Heart right ventricle (tissue), 16 donors: ENCODE measurements at regions of chr1 and their contacts with region 1.

Region 1: GRCh38 chr1:154479764-154480421 is 22.1 kb upstream of the TDRD10 start:
- DNase-seq: peak in 1 of 2 donors; percentile 79
- ATAC-seq: peak; percentile 84 to 92 (median 90)
- H3K4me3 ChIP-seq: no peak overlapping the region
- H3K27ac ChIP-seq: peak overlapping the region in 4 of 10 donors; percentile 23 to 66 (median 44)
- H3K4me1 ChIP-seq: peaks cover 0 to 49% (median 27%) of the 10 kb centered on the region in 9 donors
- H3K27me3 ChIP-seq: no peaks in the 10 kb centered on the region
- CTCF ChIP-seq: peak; percentile 85 to 95 (median 94)

Region 2: DNA sequence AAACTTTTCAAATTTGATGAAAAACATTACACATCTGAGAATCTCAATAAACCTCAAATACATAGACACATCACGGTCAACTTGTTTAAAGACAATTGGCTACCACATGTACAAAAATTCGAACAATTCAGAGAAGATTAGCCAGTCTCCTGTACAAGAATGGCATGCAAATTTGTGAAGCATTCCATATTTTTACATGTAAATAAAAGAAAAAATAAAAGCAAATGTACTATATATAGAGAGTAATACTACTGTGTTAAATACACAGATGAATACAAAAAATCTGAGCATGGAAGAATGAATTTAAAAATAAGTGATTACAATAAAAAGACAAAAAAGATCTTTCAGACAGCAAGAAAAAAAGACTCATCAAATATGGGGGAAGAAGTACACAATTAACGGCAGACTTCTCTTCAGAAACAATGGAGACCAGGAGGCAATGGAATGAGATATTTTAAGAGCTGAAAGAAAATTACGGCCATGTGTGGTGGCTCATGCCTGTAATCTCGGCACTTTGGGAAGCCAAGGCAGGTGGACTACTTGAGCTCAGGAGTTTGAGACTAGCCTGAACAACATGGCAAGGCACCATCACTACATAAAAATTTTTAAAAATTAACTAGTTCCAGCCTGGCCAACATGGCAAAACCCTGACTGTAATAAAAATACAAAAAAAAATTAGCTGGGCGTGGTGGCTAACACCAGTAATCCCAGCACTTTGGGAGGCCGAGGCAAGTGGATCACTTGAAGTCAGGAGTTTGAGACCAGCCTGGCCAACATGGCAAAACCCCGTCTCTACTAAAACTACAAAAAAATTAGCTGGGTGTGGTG is 184.3 kb before region 1 on chr1:
- intact Hi-C with region 1: no loop called
- DNase-seq: no peak
- ATAC-seq: no peak
- H3K4me3 ChIP-seq: no peak overlapping the region
- H3K27ac ChIP-seq: no peak overlapping the region
- H3K4me1 ChIP-seq: no peaks in the 10 kb centered on the region
- H3K27me3 ChIP-seq: no peaks in the 10 kb centered on the region
- CTCF ChIP-seq: no peak

Region 3: GRCh38 chr1:154419620-154420571 is 60.0 kb before region 1 on chr1:
- intact Hi-C with region 1: no loop called
- DNase-seq: peak; percentile 84 to 87
- ATAC-seq: peak; percentile 83 to 93 (median 90)
- H3K4me3 ChIP-seq: peak overlapping the region in 3 of 10 donors; percentile 12 to 26 (median 21)
- H3K27ac ChIP-seq: peak overlapping the region; percentile 78 to 97 (median 92)
- H3K4me1 ChIP-seq: peaks cover 28 to 96% (median 78%) of the 10 kb centered on the region in 9 donors
- H3K27me3 ChIP-seq: no peaks in the 10 kb centered on the region
- CTCF ChIP-seq: no peak

Region 4: DNA sequence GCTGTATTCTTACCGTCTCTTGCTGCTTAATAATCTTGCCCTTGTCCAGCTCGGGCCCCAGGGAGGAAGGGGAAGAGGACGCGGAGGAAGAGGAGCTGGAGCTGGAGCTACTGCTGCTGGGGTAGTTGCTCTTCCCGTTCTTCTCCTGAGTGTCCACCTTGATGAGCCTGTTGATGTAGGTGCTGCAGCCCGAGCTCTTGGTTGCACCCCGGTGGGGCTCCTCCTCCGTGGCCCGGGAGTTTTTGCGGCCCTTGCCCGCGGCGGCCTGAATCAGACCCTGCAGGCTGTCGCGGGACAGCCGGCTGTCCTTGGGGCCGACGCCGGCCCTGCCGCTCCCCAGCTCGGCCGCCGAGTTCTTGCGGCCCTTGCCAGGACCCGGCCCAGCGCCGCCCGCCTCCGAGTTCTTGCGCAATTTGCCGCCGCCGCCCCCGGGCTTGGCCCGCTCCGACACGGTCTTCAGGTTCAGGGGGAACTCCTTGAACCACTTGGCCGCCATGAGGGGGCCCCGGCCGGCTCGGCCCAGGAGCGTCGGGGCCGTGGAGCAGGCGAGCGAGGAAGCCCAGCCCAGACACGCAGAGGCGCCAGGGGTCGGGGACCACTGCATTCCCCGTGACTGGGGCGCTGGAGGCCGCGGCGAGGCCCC is 21.7 kb after region 1 on chr1:
- intact Hi-C with region 1: loop called in 2 of 10 experiments (anchors 1 to 2 kb)
- DNase-seq: peak; percentile 36 to 74
- ATAC-seq: peak; percentile 25 to 79 (median 62)
- H3K4me3 ChIP-seq: peak overlapping the region; percentile 48 to 79 (median 67)
- H3K27ac ChIP-seq: peak overlapping the region; percentile 76 to 95 (median 89)
- H3K4me1 ChIP-seq: peaks cover 3 to 41% (median 19%) of the 10 kb centered on the region in 9 donors
- H3K27me3 ChIP-seq: peaks cover 0 to 64% (median 27%) of the 10 kb centered on the region in 7 donors
- CTCF ChIP-seq: peak in 1 of 9 donors; percentile 12

Region 5: DNA sequence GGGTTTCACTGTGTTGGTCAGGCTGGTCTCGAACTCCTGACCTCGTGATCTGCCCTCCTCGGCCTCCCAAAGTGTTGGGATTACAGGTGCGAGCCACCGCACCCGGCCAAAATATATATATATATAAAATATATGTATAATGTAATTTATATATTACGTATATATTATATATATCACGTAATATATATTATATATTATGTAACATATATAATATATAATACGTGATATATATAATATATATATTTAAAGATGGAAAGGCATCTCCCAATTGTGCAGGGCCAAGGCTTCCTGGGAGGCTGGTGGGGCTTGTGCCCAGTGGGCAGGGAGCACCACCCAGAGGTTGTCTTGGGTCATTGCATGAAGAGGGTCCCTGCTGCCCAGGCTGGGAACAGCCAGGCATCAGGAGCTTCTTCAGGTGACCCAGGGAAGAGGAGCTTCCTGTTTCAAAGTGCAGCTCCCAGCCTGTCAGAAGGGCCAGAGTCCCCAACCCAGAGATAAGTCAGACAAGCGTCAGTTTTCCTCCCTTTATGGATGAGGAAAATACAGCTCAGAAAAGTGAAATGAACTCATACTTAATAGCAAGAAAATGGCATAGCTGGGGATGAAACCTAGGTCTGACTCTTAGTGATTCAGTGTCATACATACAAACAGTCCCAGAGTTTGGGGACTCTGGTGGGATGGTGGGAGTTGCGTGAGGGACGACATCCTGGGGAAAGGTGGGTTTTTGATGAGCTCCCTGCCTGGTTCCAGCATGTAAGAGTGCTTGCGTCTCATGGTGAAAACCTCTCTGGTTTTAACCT is 66.6 kb after region 1 on chr1:
- intact Hi-C with region 1: loop called (anchors 1 to 5 kb)
- DNase-seq: peak; percentile 49 to 51
- ATAC-seq: peak in 6 of 8 donors; percentile 70 to 80 (median 74)
- H3K4me3 ChIP-seq: no peak overlapping the region
- H3K27ac ChIP-seq: no peak overlapping the region
- H3K4me1 ChIP-seq: peaks cover 0 to 34% (median 19%) of the 10 kb centered on the region in 9 donors
- H3K27me3 ChIP-seq: no peaks in the 10 kb centered on the region
- CTCF ChIP-seq: peak; percentile 67 to 86 (median 83)

Region 6: GRCh38 chr1:154878371-154879022 is 398.6 kb after region 1 on chr1:
- intact Hi-C with region 1: loop called in 8 of 10 experiments (anchors 2 to 10 kb)
- DNase-seq: peak; percentile 80 to 81
- ATAC-seq: peak; percentile 92 to 97 (median 96)
- H3K4me3 ChIP-seq: no peak overlapping the region
- H3K27ac ChIP-seq: no peak overlapping the region
- H3K4me1 ChIP-seq: peaks cover 0 to 7% (median 3%) of the 10 kb centered on the region in 9 donors
- H3K27me3 ChIP-seq: no peaks in the 10 kb centered on the region
- CTCF ChIP-seq: peak; percentile 82 to 92 (median 90)

Region 7: GRCh38 chr1:155050560-155051341 is 570.9 kb after region 1 on chr1 and contains the start of gene ADAM15:
- intact Hi-C with region 1: loop called in 1 of 10 experiments (anchors 10 kb)
- DNase-seq: peak; percentile 82 to 88
- ATAC-seq: peak; percentile 73 to 91 (median 82)
- H3K4me3 ChIP-seq: peak within 1 kb of the TSS; percentile 51 to 98 (median 84)
- H3K27ac ChIP-seq: peak within 1 kb of the TSS; percentile 53 to 98 (median 94)
- H3K4me1 ChIP-seq: peaks cover 12 to 45% (median 27%) of the 10 kb centered on the region in 9 donors
- H3K27me3 ChIP-seq: no peaks in the 10 kb centered on the region
- CTCF ChIP-seq: peak; percentile 85 to 96 (median 92)
- total RNA-seq, gene ADAM15: 46.7 to 146 (median 58.5) TPM